ENCODE measurements at regions of chrX and their contacts with region 1.

Region 1: GRCh38 chrX:23901805-23902204 is 5.9 kb downstream of the APOO start:
- DNase-seq: peak; percentile 70
- ATAC-seq: peak; percentile 78
- H3K4me3 ChIP-seq: no peak overlapping the region
- H3K4me3 Mint-ChIP-seq: no peak overlapping the region
- H3K27ac ChIP-seq: peak overlapping the region in 1 of 2 donors; percentile 14
- H3K27ac Mint-ChIP-seq: no peak overlapping the region
- H3K4me1 ChIP-seq: peaks cover 6 to 12% of the 10 kb centered on the region in 2 donors
- H3K4me1 Mint-ChIP-seq: peaks cover 6% of the 10 kb centered on the region
- H3K27me3 ChIP-seq: no peaks in the 10 kb centered on the region
- H3K27me3 Mint-ChIP-seq: no peaks in the 10 kb centered on the region
- CTCF ChIP-seq: no peak

Region 2: GRCh38 chrX:21985332-21985777 is 1916.5 kb before region 1 on chrX:
- CTCF ChIA-PET with region 1: interaction called, 11 read pairs
- POLR2A ChIA-PET with region 1: no interaction called
- intact Hi-C with region 1: no loop called
- DNase-seq: peak; percentile 80
- ATAC-seq: peak; percentile 94
- H3K4me3 ChIP-seq: no peak overlapping the region
- H3K4me3 Mint-ChIP-seq: no peak overlapping the region
- H3K27ac ChIP-seq: no peak overlapping the region
- H3K27ac Mint-ChIP-seq: peak overlapping the region; percentile 10
- H3K4me1 ChIP-seq: peaks cover 0 to 13% of the 10 kb centered on the region in 2 donors
- H3K4me1 Mint-ChIP-seq: peaks cover 13% of the 10 kb centered on the region
- H3K27me3 ChIP-seq: no peaks in the 10 kb centered on the region
- H3K27me3 Mint-ChIP-seq: no peaks in the 10 kb centered on the region
- CTCF ChIP-seq: peak; percentile 82

Region 3: DNA sequence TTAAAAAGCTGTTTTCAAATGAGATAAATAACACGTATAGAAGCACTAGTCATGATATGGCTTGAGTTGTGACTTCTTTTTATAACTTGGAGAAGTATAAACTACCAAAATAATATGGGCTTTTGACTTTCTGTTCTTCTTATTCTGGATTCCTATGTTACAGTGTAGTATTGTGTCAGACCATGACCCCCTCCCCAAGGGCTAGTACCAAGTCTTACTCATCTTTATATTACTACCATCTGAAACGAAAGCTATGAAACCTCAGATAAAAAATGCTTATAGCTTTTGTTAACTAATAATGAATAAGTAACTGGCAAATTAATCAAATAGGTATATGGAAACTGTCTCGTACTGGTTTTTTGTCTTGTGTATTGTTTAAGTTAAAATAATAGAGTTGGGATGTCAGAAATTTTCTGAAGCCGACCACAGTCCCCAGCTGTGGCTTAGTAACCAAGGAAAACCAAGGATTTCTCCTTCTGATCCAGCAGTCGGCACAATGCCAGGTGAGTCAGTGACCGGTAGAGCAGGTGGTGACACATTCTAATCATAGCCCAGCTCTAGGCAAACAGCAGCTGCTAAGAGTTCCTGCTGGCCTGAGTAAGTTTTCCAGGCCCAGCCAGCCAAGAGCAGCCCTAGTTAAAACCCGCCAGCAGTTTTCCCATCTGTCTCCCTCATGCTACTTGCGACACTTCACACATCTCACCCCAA is 397.8 kb before region 1 on chrX:
- CTCF ChIA-PET with region 1: no interaction called
- POLR2A ChIA-PET with region 1: no interaction called
- intact Hi-C with region 1: no loop called
- DNase-seq: no peak
- ATAC-seq: no peak
- H3K4me3 ChIP-seq: no peak overlapping the region
- H3K4me3 Mint-ChIP-seq: no peak overlapping the region
- H3K27ac ChIP-seq: no peak overlapping the region
- H3K27ac Mint-ChIP-seq: no peak overlapping the region
- H3K4me1 ChIP-seq: no peaks in the 10 kb centered on the region
- H3K4me1 Mint-ChIP-seq: no peaks in the 10 kb centered on the region
- H3K27me3 ChIP-seq: no peaks in the 10 kb centered on the region
- H3K27me3 Mint-ChIP-seq: no peaks in the 10 kb centered on the region
- CTCF ChIP-seq: no peak

Region 4: GRCh38 chrX:23673108-23673507 is 228.7 kb before region 1 on chrX:
- CTCF ChIA-PET with region 1: interaction called, 12 read pairs
- POLR2A ChIA-PET with region 1: interaction called, 10 read pairs
- intact Hi-C with region 1: loop called (anchors 10 kb)
- DNase-seq: no peak
- ATAC-seq: no peak
- H3K4me3 ChIP-seq: no peak overlapping the region
- H3K4me3 Mint-ChIP-seq: no peak overlapping the region
- H3K27ac ChIP-seq: no peak overlapping the region
- H3K27ac Mint-ChIP-seq: no peak overlapping the region
- H3K4me1 ChIP-seq: peaks cover 4 to 6% of the 10 kb centered on the region in 2 donors
- H3K4me1 Mint-ChIP-seq: peaks cover 6% of the 10 kb centered on the region
- H3K27me3 ChIP-seq: no peaks in the 10 kb centered on the region
- H3K27me3 Mint-ChIP-seq: no peaks in the 10 kb centered on the region
- CTCF ChIP-seq: no peak

Region 5: GRCh38 chrX:23699636-23700194 is 202.1 kb before region 1 on chrX:
- CTCF ChIA-PET with region 1: interaction called, 91 read pairs
- POLR2A ChIA-PET with region 1: no interaction called
- intact Hi-C with region 1: no loop called
- DNase-seq: peak; percentile 45
- ATAC-seq: peak; percentile 76
- H3K4me3 ChIP-seq: peak overlapping the region in 4 of 5 experiments; percentile 26 to 60 (median 47)
- H3K4me3 Mint-ChIP-seq: peak overlapping the region; percentile 78
- H3K27ac ChIP-seq: peak overlapping the region in 1 of 2 donors; percentile 43
- H3K27ac Mint-ChIP-seq: peak overlapping the region; percentile 63
- H3K4me1 ChIP-seq: no peaks in the 10 kb centered on the region
- H3K4me1 Mint-ChIP-seq: peaks cover 6% of the 10 kb centered on the region
- H3K27me3 ChIP-seq: no peaks in the 10 kb centered on the region
- H3K27me3 Mint-ChIP-seq: no peaks in the 10 kb centered on the region
- CTCF ChIP-seq: no peak

Region 6: DNA sequence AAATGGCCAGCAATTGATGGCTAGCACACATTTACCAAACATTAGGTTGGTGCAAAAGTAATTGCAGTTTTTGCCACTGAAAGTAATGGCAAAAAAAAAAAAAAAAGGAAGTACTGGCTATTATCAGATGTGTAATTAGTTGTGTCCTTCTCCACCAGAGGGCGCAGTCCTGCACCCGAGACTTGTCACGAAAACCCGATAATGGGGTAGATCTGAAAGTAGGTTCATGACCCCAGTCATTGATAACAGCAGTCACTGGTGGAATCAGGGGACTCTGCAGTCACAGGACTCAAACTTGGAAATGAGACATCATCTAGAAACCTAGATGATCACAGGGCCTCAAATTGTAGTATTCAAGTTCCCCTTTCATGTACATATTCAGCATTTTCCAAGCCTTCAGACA is 145.6 kb before region 1 on chrX:
- CTCF ChIA-PET with region 1: interaction called, 18 read pairs
- POLR2A ChIA-PET with region 1: no interaction called
- intact Hi-C with region 1: loop called (anchors 1 kb)
- DNase-seq: peak; percentile 80
- ATAC-seq: peak; percentile 41
- H3K4me3 ChIP-seq: no peak overlapping the region
- H3K4me3 Mint-ChIP-seq: peak overlapping the region; percentile 45
- H3K27ac ChIP-seq: no peak overlapping the region
- H3K27ac Mint-ChIP-seq: peak overlapping the region; percentile 56
- H3K4me1 ChIP-seq: peaks cover 0 to 3% of the 10 kb centered on the region in 2 donors
- H3K4me1 Mint-ChIP-seq: peaks cover 3% of the 10 kb centered on the region
- H3K27me3 ChIP-seq: no peaks in the 10 kb centered on the region
- H3K27me3 Mint-ChIP-seq: no peaks in the 10 kb centered on the region
- CTCF ChIP-seq: peak; percentile 62

Region 7: GRCh38 chrX:23782863-23783568 is 118.8 kb before region 1 on chrX and contains the start of gene SAT1:
- CTCF ChIA-PET with region 1: interaction called, 64 read pairs
- POLR2A ChIA-PET with region 1: interaction called, 11 read pairs
- intact Hi-C with region 1: loop called (anchors 1 kb)
- DNase-seq: peak; percentile 95
- ATAC-seq: peak; percentile 88
- H3K4me3 ChIP-seq: peak within 1 kb of the TSS; percentile 71 to 92 (median 81)
- H3K4me3 Mint-ChIP-seq: peak within 1 kb of the TSS; percentile 94
- H3K27ac ChIP-seq: peak within 1 kb of the TSS; percentile 87 to 92
- H3K27ac Mint-ChIP-seq: peak within 1 kb of the TSS; percentile 98
- H3K4me1 ChIP-seq: peaks cover 17 to 37% of the 10 kb centered on the region in 2 donors
- H3K4me1 Mint-ChIP-seq: peaks cover 32% of the 10 kb centered on the region
- H3K27me3 ChIP-seq: no peaks in the 10 kb centered on the region
- H3K27me3 Mint-ChIP-seq: no peaks in the 10 kb centered on the region
- CTCF ChIP-seq: peak; percentile 72
- total RNA-seq, gene SAT1: 162 and 172 TPM in 2 replicates

Region 8: GRCh38 chrX:23888887-23889501 is 12.8 kb before region 1 on chrX:
- CTCF ChIA-PET with region 1: interaction called, 10 read pairs
- POLR2A ChIA-PET with region 1: no interaction called
- intact Hi-C with region 1: no loop called
- DNase-seq: no peak
- ATAC-seq: no peak
- H3K4me3 ChIP-seq: no peak overlapping the region
- H3K4me3 Mint-ChIP-seq: no peak overlapping the region
- H3K27ac ChIP-seq: no peak overlapping the region
- H3K27ac Mint-ChIP-seq: no peak overlapping the region
- H3K4me1 ChIP-seq: no peaks in the 10 kb centered on the region
- H3K4me1 Mint-ChIP-seq: no peaks in the 10 kb centered on the region
- H3K27me3 ChIP-seq: no peaks in the 10 kb centered on the region
- H3K27me3 Mint-ChIP-seq: no peaks in the 10 kb centered on the region
- CTCF ChIP-seq: no peak